PC-3 (cell line): ENCODE measurements at regions of chr13 and their contacts with region 1.

Region 1: GRCh38 chr13:74026753-74027152 is 107.5 kb downstream of the KLF12 start:
- DNase-seq: peak; percentile 23
- ATAC-seq: peak; percentile 22; the same call in 1 of the 2 replicates
- H3K4me3 ChIP-seq: no peak overlapping the region
- H3K27ac ChIP-seq: no peak overlapping the region
- H3K4me1 ChIP-seq: peaks cover 7% of the 10 kb centered on the region; the same call in 1 of the 2 replicates
- H3K27me3 ChIP-seq: no peaks in the 10 kb centered on the region
- CTCF ChIP-seq: no peak

Region 2: GRCh38 chr13:73809561-73809960 is 217.2 kb before region 1 on chr13:
- CTCF ChIA-PET with region 1: no interaction called
- POLR2A ChIA-PET with region 1: interaction called, 10 read pairs
- intact Hi-C with region 1: no loop called
- DNase-seq: peak; percentile 63
- ATAC-seq: peak; percentile 95
- H3K4me3 ChIP-seq: no peak overlapping the region
- H3K27ac ChIP-seq: no peak overlapping the region
- H3K4me1 ChIP-seq: peaks cover 5% of the 10 kb centered on the region
- H3K27me3 ChIP-seq: no peaks in the 10 kb centered on the region
- CTCF ChIP-seq: no peak